ENCODE measurements at regions of chr6 and their contacts with region 1.

Region 1: DNA sequence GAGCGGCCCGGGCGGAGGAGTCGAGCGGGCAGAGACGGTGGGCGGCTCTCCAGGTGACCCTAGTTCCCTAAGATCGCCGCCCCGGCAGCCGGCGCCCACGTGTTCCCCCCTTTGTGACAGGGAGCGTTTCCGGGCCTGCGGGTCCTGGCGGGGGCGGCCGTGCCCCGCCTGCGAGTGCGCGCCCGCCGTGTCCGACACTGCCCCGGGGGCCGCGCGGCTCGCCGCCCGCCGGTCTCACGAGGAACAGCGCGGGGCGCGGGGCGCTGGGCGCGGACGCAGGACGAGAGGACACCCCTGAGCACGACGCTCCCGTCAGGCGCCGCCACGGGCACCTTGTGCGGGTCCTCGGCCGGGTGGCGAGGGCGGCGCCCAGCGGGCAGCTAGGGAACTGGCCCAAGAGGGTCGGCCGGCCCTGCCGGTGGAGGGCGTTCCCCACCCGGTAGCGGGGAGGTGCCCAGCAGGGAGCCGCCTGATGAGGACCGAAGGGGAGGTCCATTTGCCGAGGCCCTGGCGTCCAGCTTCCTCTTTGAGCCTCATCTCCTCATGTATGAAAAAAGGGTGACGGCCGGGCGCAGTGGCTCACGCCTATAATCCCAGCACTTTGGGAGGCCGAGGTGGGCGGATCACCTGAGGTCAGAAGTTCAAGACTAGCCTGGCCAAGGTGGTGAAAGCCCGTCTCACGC is at the start of gene VARS1:
- DNase-seq: peak; percentile 81
- H3K4me3 Mint-ChIP-seq: peak within 1 kb of the TSS; percentile 93
- H3K27ac Mint-ChIP-seq: peak within 1 kb of the TSS; percentile 98
- H3K4me1 Mint-ChIP-seq: peaks cover 30% of the 10 kb centered on the region
- H3K27me3 Mint-ChIP-seq: no peaks in the 10 kb centered on the region
- total RNA-seq, gene VARS1: 166 and 176 TPM in 2 replicates

Region 2: DNA sequence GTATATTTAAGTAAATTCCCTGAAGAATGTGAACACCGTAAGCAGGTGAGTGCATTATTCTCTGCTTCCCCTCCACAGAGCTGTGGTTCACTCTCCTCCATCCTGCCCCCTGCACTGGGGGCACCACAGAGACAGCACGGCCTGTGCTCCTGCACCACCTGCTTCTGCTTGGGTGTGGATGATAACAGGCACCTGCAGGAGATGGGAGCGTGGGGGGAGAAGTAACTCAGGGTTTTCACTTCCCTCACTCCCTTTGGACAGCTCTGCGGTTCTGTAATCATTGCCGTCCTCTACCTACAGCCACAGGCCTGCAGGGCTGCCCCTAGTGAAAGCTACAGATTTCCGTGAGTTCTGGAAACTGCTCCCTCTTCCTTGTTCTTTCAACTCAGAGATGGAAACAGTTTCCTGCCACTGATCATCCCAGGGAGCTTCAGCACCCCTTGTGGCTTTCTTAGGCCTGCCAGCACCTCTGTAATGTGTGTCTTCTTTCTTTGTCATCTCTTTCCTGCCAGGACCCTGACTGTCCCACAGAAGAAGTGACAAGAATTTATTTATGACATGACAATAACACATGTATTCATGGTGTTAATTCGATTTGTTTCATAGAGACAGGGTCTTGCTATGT is 319.1 kb before region 1 on chr6:
- intact Hi-C with region 1: no loop called
- DNase-seq: no peak
- H3K4me3 Mint-ChIP-seq: no peak overlapping the region
- H3K27ac Mint-ChIP-seq: no peak overlapping the region
- H3K4me1 Mint-ChIP-seq: peaks cover 11% of the 10 kb centered on the region
- H3K27me3 Mint-ChIP-seq: no peaks in the 10 kb centered on the region

Region 3: DNA sequence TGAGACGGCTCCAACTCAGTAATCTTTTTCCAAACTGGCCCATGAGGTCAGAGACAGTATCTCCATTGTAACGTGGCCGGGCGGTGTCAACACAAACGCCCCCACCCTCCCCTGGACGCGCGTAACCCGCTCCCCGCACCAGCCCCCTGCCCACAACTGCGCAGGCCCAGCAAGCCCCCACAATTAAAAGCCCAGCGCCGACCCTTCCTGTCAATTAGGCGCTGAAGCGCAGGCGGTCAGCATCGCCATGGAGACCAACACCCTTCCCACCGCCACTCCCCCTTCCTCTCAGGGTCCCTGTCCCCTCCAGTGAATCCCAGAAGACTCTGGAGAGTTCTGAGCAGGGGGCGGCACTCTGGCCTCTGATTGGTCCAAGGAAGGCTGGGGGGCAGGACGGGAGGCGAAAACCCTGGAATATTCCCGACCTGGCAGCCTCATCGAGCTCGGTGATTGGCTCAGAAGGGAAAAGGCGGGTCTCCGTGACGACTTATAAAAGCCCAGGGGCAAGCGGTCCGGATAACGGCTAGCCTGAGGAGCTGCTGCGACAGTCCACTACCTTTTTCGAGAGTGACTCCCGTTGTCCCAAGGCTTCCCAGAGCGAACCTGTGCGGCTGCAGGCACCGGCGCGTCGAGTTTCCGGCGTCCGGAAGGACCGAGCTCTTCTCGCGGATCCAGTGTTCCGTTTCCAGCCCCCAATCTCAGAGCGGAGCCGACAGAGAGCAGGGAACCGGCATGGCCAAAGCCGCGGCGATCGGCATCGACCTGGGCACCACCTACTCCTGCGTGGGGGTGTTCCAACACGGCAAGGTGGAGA is 19.5 kb after region 1 on chr6 and contains the starts of genes HSPA1A and HSPA1L:
- intact Hi-C with region 1: loop called (anchors 2 kb)
- DNase-seq: peak; percentile 70
- H3K4me3 Mint-ChIP-seq: peak within 1 kb of the TSS; percentile 87
- H3K27ac Mint-ChIP-seq: peak within 1 kb of the TSS; percentile 91
- H3K4me1 Mint-ChIP-seq: peaks cover 36% of the 10 kb centered on the region
- H3K27me3 Mint-ChIP-seq: no peaks in the 10 kb centered on the region
- total RNA-seq, gene HSPA1A: 112 and 118 TPM in 2 replicates
- total RNA-seq, gene HSPA1L: 2.1 and 2.4 TPM in 2 replicates